Motor neuron (in vitro differentiated cells): ENCODE measurements at regions of chr15 and their contacts with region 1.

Region 1: GRCh38 chr15:55789066-55789660 is 46.2 kb upstream of the PRTG start:
- ATAC-seq: no peak
- H3K4me3 ChIP-seq: no peak overlapping the region
- H3K27ac ChIP-seq: no peak overlapping the region
- H3K4me1 ChIP-seq: peaks cover 5 to 17% of the 10 kb centered on the region in 2 donors

Region 2: DNA sequence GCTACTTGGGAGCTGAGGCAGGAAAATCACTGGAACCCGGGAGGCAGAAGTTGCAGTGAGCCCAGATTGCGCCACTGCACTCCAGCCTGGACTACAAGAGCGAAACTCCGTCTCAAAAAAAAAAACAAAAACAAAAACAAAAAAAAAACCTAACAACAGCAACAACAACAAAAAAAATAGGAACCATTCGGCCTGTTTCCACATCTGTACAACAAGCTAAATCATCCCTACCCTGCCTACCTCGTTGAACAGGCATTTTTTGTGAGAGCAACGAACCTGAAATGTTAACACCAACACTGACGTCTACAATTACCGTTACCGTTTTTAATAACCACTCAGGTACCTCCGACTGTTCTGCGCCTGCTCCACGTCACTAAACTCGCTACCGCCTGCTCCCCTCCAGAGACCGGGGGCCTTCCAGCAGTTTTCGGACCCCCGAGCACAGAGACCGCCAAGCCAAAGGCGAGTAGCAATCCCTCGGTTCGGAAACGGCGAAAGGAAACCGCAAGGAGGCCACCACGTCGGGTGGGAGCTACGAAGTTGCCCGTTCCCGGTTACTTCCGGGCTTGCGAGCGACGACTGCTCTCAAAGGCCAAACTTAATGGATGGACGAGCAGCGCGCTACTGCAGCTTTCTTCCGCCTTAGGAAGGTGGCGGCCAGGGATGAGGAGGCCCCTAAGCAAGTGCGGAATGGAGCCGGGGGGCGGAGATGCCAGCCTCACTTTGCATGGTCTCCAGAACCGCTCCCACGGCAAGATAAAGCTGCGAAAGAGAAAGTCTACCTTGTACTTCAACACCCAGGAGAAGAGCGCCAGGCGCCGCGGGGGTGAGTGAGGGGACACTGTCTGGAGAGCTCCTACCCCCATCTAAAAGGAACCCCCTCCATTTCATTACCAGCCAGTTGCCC is 470.3 kb before region 1 on chr15 and contains the starts of genes PIGB and PIGBOS1:
- in situ Hi-C with region 1: no loop called
- ATAC-seq: peak; percentile 93 to 98 (median 98)
- H3K4me3 ChIP-seq: peak within 1 kb of the TSS; percentile 49 to 93 (median 74)
- H3K27ac ChIP-seq: peak within 1 kb of the TSS; percentile 82 to 92
- H3K4me1 ChIP-seq: peaks cover 2% of the 10 kb centered on the region in 2 donors
- total RNA-seq, gene PIGB: 5.4 to 20.9 (median 11.1) TPM
- total RNA-seq, gene PIGBOS1: 10.8 to 19.7 (median 15.0) TPM

Region 3: DNA sequence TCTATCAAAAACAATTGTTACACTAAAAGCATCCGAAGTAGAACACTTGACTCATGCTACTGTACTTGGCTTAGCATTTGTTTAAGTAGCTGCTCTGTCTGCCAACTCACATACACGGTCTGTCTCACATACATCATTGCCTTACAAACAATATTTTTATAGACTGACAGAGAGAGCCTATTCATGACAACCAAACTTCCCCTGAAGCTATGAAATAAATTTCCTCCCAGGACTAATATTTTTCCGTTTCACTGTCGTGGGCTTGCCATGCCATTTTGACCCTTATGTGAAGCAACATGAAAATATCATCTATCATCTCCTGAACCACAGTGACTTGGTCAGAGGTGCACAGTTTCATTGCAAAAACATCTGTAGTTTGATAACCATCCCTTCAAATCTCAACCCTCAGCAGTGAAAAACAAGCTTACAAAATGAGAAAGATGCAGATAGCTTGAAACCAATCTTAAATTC is 134.6 kb before region 1 on chr15:
- in situ Hi-C with region 1: loop called in 2 of 9 experiments (anchors 10 to 25 kb)
- ATAC-seq: peak in 5 of 8 experiments; percentile 42 to 74 (median 48)
- H3K4me3 ChIP-seq: no peak overlapping the region
- H3K27ac ChIP-seq: peak overlapping the region in 1 of 2 donors; percentile 18
- H3K4me1 ChIP-seq: peaks cover 51% of the 10 kb centered on the region in 2 donors